ENCODE measurements at regions of chr1 and their contacts with region 1.

Region 1: DNA sequence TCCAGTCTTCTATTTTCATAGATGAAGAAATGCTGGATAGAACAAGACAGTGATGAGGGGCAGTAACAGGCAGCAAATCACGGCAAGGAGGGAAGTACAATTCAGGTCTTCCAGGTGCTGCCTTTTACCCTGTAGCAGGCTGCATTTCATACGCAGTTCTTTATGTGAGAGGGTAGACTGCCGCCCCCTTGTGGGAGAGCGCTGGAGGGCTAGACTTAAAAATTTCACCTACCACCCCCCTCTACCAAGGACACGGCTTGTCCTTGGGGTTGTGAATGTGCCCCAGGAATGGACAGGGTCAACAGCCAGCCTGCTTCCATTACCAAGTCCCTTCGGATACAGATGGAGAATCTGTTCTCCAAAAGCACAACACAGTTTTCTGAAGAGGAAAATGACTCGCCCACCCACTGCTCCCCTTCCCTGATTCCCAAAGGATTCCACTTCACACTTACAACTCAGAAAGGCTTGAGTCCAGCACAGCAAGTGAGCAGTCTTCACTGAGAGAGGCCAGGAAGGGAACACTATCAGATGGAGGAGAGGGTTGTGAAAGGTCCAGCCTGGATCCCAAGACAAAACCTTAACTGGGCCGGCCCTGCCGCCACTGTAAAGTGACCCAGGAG is 7.4 kb downstream of the WDR77 start:
- DNase-seq: peak; percentile 79
- ATAC-seq: peak; percentile 92
- H3K4me3 ChIP-seq: no peak overlapping the region
- H3K4me3 Mint-ChIP-seq: no peak overlapping the region
- H3K27ac ChIP-seq: peak overlapping the region in 1 of 2 donors; percentile 39
- H3K27ac Mint-ChIP-seq: peak overlapping the region; percentile 27
- H3K4me1 ChIP-seq: peaks cover 0 to 4% of the 10 kb centered on the region in 2 donors
- H3K4me1 Mint-ChIP-seq: peaks cover 16% of the 10 kb centered on the region
- H3K27me3 ChIP-seq: no peaks in the 10 kb centered on the region
- H3K27me3 Mint-ChIP-seq: no peaks in the 10 kb centered on the region
- CTCF ChIP-seq: peak; percentile 84

Region 2: GRCh38 chr1:111334169-111334568 is 107.5 kb before region 1 on chr1:
- CTCF ChIA-PET with region 1: no interaction called
- POLR2A ChIA-PET with region 1: no interaction called
- intact Hi-C with region 1: no loop called
- DNase-seq: peak; percentile 72
- ATAC-seq: peak; percentile 62
- H3K4me3 ChIP-seq: no peak overlapping the region
- H3K4me3 Mint-ChIP-seq: no peak overlapping the region
- H3K27ac ChIP-seq: no peak overlapping the region
- H3K27ac Mint-ChIP-seq: no peak overlapping the region
- H3K4me1 ChIP-seq: peaks cover 0 to 6% of the 10 kb centered on the region in 2 donors
- H3K4me1 Mint-ChIP-seq: no peaks in the 10 kb centered on the region
- H3K27me3 ChIP-seq: no peaks in the 10 kb centered on the region
- H3K27me3 Mint-ChIP-seq: no peaks in the 10 kb centered on the region
- CTCF ChIP-seq: peak; percentile 74

Region 3: DNA sequence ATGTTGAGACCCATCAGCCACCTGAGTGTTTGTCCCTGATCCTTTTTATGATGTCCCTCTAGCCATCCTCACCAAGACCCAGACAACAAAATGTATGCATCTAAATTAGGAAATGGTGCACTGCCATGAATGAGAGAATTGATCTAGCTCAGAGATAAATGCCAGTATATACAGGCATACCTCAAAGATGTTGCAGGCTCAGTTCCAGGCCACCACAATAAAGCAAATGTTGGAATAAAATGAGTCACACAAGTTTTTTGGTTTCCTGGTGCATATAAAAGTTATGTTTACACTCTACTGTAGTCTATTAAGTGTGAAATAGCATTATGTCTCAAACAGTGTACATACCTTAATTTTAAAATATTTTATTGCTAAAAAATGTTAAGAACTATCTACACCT is 87.1 kb before region 1 on chr1:
- CTCF ChIA-PET with region 1: no interaction called
- POLR2A ChIA-PET with region 1: no interaction called
- intact Hi-C with region 1: no loop called
- DNase-seq: no peak
- ATAC-seq: no peak
- H3K4me3 ChIP-seq: no peak overlapping the region
- H3K4me3 Mint-ChIP-seq: no peak overlapping the region
- H3K27ac ChIP-seq: no peak overlapping the region
- H3K27ac Mint-ChIP-seq: no peak overlapping the region
- H3K4me1 ChIP-seq: no peaks in the 10 kb centered on the region
- H3K4me1 Mint-ChIP-seq: no peaks in the 10 kb centered on the region
- H3K27me3 ChIP-seq: no peaks in the 10 kb centered on the region
- H3K27me3 Mint-ChIP-seq: no peaks in the 10 kb centered on the region
- CTCF ChIP-seq: no peak

Region 4: DNA sequence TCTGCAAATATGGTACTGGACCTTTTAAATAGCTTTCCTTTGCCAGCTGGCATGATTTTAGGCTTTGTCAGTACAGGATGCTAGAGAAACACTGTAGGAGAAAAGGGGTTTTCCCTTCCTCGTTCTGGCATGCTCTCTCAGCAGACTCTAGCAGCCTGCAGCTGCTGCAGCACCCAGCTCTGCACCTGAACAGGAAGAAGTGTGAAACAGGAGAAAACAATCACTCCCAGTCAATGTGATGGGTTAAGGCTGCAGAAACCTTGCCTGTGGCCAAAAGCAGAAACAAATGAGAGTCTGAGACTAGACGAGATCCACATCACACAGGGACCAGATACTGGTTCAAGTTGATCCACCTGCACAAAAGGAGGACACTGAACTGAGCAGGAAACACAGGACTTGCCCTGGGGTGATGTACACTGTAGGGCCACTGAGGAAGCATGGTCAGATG is 35.3 kb before region 1 on chr1:
- CTCF ChIA-PET with region 1: interaction called, 7 read pairs
- POLR2A ChIA-PET with region 1: no interaction called
- intact Hi-C with region 1: loop called (anchors 2 kb)
- DNase-seq: peak; percentile 83
- ATAC-seq: peak; percentile 96
- H3K4me3 ChIP-seq: no peak overlapping the region
- H3K4me3 Mint-ChIP-seq: peak overlapping the region; percentile 59
- H3K27ac ChIP-seq: peak overlapping the region; percentile 32 to 37
- H3K27ac Mint-ChIP-seq: peak overlapping the region; percentile 79
- H3K4me1 ChIP-seq: peaks cover 30 to 35% of the 10 kb centered on the region in 2 donors
- H3K4me1 Mint-ChIP-seq: peaks cover 37% of the 10 kb centered on the region
- H3K27me3 ChIP-seq: no peaks in the 10 kb centered on the region
- H3K27me3 Mint-ChIP-seq: no peaks in the 10 kb centered on the region
- CTCF ChIP-seq: no peak

Region 5: GRCh38 chr1:111570781-111571181 is 129.1 kb after region 1 on chr1:
- CTCF ChIA-PET with region 1: no interaction called
- POLR2A ChIA-PET with region 1: no interaction called
- intact Hi-C with region 1: no loop called
- DNase-seq: peak; percentile 48
- ATAC-seq: peak; percentile 43
- H3K4me3 ChIP-seq: no peak overlapping the region
- H3K4me3 Mint-ChIP-seq: no peak overlapping the region
- H3K27ac ChIP-seq: no peak overlapping the region
- H3K27ac Mint-ChIP-seq: peak overlapping the region; percentile 26
- H3K4me1 ChIP-seq: peaks cover 6 to 14% of the 10 kb centered on the region in 2 donors
- H3K4me1 Mint-ChIP-seq: peaks cover 15% of the 10 kb centered on the region
- H3K27me3 ChIP-seq: no peaks in the 10 kb centered on the region
- H3K27me3 Mint-ChIP-seq: no peaks in the 10 kb centered on the region
- CTCF ChIP-seq: peak; percentile 53

Region 6: DNA sequence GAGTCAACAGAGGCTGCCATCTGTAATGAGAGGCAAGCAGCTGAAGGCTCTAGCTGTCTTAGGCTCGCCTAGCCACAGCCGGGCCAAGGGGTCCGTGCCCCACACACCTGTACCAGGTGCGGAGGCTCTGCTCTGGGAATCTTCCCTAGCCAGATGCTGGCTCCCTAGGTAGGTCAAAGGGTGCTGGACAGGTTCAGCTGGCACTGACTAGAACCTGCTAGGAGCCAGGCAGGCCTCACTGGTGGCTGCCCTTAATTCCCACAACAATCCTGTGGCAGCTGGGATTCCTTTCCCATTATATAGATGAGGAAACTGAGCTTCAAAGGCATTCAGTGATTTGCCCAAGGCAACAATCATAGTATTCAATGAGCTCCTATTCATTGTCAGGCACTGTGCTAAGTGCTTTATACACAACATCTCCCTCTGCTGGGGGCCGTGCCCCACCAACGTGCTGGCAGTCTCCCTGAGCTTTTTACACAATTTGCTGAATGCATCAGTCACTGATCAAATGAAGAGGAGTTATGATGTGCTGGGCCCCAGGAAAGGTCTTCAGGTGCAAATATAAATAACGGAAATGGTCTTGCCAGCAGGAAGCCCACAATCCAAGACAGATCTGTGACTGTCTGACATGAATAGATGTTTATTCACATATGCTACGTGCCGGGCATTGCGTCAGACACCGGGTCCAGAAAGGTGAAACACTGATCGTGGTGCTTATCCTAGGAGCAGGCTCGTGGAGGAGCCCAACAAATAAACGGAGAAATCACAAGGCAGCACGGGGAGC is 372.0 kb after region 1 on chr1:
- CTCF ChIA-PET with region 1: no interaction called
- POLR2A ChIA-PET with region 1: no interaction called
- intact Hi-C with region 1: no loop called
- DNase-seq: peak; percentile 32
- ATAC-seq: no peak
- H3K4me3 ChIP-seq: no peak overlapping the region
- H3K4me3 Mint-ChIP-seq: no peak overlapping the region
- H3K27ac ChIP-seq: no peak overlapping the region
- H3K27ac Mint-ChIP-seq: no peak overlapping the region
- H3K4me1 ChIP-seq: peaks cover 23 to 37% of the 10 kb centered on the region in 2 donors
- H3K4me1 Mint-ChIP-seq: peaks cover 30% of the 10 kb centered on the region
- H3K27me3 ChIP-seq: peaks cover 0 to 5% (median 0%) of the 10 kb centered on the region in 4 experiments
- H3K27me3 Mint-ChIP-seq: no peaks in the 10 kb centered on the region
- CTCF ChIP-seq: no peak